SK-N-SH (cell line): ENCODE measurements at regions of chr18 and their contacts with region 1.

Region 1: GRCh38 chr18:21820035-21820810 is 79.6 kb downstream of the MIB1 start:
- DNase-seq: peak; percentile 33
- H3K4me3 ChIP-seq: no peak overlapping the region; a peak in 1 of 4 replicates
- H3K27ac ChIP-seq: no peak overlapping the region
- H3K4me1 ChIP-seq: no peaks in the 10 kb centered on the region
- H3K27me3 ChIP-seq: no peaks in the 10 kb centered on the region
- CTCF ChIP-seq: peak; percentile 76
- EP300 ChIP-seq: no peak
- RAD21 ChIP-seq: peak; percentile 59

Region 2: DNA sequence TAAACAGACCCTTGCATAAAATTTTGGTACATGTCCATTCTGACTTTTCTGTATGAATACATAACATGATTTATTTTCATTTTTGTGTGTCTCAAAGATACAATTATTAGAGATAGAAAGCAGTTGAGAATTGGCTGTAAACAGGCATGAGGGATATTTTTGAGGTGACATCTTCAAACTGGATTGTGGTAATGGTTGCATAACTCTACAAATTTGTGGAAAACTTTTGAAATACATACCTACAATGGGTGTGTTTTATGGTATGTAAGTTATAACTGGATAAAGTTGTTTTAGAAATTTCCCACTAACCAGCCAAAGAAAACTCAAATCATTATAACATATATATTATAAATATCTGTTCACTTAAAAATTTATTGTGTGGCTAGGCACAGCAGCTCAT is 538.6 kb before region 1 on chr18:
- CTCF ChIA-PET with region 1: no interaction called
- POLR2A ChIA-PET with region 1: no interaction called
- DNase-seq: no peak
- H3K4me3 ChIP-seq: no peak overlapping the region
- H3K27ac ChIP-seq: no peak overlapping the region
- H3K4me1 ChIP-seq: no peaks in the 10 kb centered on the region
- H3K27me3 ChIP-seq: 0 out of 2 replicates have a peak, but pooled peaks cover 5% of the 10 kb centered on the region
- CTCF ChIP-seq: no peak
- EP300 ChIP-seq: no peak
- RAD21 ChIP-seq: no peak

Region 3: GRCh38 chr18:21803495-21803894 is 16.7 kb before region 1 on chr18:
- CTCF ChIA-PET with region 1: interaction called, 15 read pairs
- POLR2A ChIA-PET with region 1: no interaction called
- DNase-seq: no peak
- H3K4me3 ChIP-seq: no peak overlapping the region
- H3K27ac ChIP-seq: no peak overlapping the region
- H3K4me1 ChIP-seq: no peaks in the 10 kb centered on the region; a peak in 1 of 4 replicates
- H3K27me3 ChIP-seq: no peaks in the 10 kb centered on the region
- CTCF ChIP-seq: no peak
- EP300 ChIP-seq: no peak
- RAD21 ChIP-seq: no peak

Region 4: GRCh38 chr18:21831413-21831831 is 11.2 kb after region 1 on chr18:
- CTCF ChIA-PET with region 1: interaction called, 39 read pairs
- POLR2A ChIA-PET with region 1: no interaction called
- DNase-seq: no peak
- H3K4me3 ChIP-seq: no peak overlapping the region
- H3K27ac ChIP-seq: no peak overlapping the region
- H3K4me1 ChIP-seq: peaks cover 0 to 6% of the 10 kb centered on the region in 2 experiments; a peak in 2 of 4 replicates
- H3K27me3 ChIP-seq: no peaks in the 10 kb centered on the region
- CTCF ChIP-seq: no peak
- EP300 ChIP-seq: no peak
- RAD21 ChIP-seq: no peak

Region 5: GRCh38 chr18:21851327-21851972 is 31.2 kb after region 1 on chr18:
- CTCF ChIA-PET with region 1: interaction called, 10 read pairs
- POLR2A ChIA-PET with region 1: no interaction called
- DNase-seq: peak; percentile 23
- H3K4me3 ChIP-seq: no peak overlapping the region
- H3K27ac ChIP-seq: no peak overlapping the region
- H3K4me1 ChIP-seq: no peaks in the 10 kb centered on the region; a peak in 1 of 4 replicates
- H3K27me3 ChIP-seq: no peaks in the 10 kb centered on the region
- CTCF ChIP-seq: peak; percentile 37
- EP300 ChIP-seq: no peak
- RAD21 ChIP-seq: peak; percentile 57